AG04449 (cell line): ENCODE measurements at regions of chr15 and their contacts with region 1.

Region 1: DNA sequence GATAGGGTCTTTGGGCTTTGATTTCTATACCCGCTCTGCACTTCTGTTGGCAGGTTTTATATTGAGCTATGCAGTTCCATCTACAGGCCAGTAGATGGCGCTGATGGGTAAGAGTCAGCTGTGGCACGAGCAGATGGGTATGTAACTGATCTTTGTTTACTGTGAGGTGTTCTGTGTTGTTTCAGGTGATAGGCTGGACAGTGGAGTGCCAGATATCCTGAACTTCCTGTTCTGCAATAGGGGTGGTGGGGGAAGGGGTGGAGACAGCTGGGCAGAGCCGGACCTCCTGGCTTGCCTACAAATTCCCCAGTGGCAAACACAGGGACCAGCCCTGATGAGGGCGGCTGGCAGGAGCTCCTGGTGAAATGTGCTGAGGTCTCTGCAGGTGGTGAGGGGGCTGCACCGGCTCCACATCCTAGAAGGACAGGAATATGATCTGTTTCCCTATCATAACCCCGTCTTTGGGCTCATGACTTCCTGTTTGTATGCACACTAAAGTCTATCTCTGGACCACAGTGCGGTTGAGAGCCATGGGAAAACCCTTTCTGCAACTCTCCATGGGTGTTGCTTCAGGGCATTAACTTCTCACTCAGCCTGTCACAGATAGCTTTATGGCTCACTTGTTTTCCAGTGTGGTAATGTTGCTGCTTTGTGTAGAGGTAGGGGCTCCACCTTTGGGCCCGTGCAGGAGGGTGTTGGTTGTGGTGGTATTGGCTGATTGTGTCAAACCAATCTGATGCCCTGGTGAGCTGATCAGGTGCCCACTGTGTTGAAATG is 13.4 kb upstream of the FAM98B start:
- DNase-seq: no peak
- H3K4me3 ChIP-seq: no peak overlapping the region
- CTCF ChIP-seq: peak; percentile 83

Region 2: GRCh38 chr15:38002883-38003477 is 437.6 kb before region 1 on chr15:
- CTCF ChIA-PET with region 1: interaction called, 12 read pairs
- POLR2A ChIA-PET with region 1: no interaction called
- DNase-seq: no peak
- H3K4me3 ChIP-seq: no peak overlapping the region
- CTCF ChIP-seq: peak; percentile 81

Region 3: GRCh38 chr15:38453971-38454695 is 13.6 kb after region 1 on chr15 and contains the start of gene FAM98B:
- CTCF ChIA-PET with region 1: interaction called, 45 read pairs
- POLR2A ChIA-PET with region 1: interaction called, 5 read pairs
- DNase-seq: no peak
- H3K4me3 ChIP-seq: peak within 1 kb of the TSS; percentile 97
- CTCF ChIP-seq: no peak

Region 4: DNA sequence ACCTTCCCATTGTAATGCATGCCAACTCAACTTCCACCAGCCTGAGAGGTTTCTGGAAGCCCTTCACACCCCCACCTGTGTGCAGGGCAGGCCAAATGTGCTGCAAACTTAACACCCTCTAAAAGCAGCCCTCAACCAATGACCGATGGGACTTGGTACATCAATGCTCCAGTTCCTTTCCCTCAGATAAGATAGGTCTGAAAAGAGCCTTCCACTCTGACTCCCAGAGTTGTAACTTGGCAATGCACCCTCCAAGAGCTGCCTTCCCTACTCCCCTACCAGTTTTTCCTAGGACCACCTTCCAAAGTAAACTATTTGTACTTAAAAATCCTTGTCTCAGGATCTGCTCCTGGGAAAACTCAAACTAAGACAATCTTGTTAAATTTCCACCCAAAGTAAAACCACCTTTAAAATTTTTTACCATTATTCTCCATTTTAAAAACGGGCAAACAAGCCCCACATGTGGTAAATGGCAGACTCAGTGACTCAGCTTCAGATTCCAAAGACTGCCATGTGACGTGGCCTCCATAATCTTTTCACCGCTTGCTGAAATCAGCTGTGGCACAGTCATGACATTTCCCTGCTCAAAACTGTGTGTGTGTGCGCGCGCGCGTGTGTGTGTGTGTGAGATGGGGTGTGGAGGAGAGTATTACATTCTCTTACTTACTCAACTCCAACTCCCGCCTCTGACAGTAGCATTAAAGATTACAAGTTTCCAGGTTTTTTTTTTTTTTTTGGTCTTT is 106.9 kb after region 1 on chr15:
- CTCF ChIA-PET with region 1: interaction called, 14 read pairs
- POLR2A ChIA-PET with region 1: no interaction called
- DNase-seq: no peak
- H3K4me3 ChIP-seq: no peak overlapping the region
- CTCF ChIP-seq: no peak

Region 5: DNA sequence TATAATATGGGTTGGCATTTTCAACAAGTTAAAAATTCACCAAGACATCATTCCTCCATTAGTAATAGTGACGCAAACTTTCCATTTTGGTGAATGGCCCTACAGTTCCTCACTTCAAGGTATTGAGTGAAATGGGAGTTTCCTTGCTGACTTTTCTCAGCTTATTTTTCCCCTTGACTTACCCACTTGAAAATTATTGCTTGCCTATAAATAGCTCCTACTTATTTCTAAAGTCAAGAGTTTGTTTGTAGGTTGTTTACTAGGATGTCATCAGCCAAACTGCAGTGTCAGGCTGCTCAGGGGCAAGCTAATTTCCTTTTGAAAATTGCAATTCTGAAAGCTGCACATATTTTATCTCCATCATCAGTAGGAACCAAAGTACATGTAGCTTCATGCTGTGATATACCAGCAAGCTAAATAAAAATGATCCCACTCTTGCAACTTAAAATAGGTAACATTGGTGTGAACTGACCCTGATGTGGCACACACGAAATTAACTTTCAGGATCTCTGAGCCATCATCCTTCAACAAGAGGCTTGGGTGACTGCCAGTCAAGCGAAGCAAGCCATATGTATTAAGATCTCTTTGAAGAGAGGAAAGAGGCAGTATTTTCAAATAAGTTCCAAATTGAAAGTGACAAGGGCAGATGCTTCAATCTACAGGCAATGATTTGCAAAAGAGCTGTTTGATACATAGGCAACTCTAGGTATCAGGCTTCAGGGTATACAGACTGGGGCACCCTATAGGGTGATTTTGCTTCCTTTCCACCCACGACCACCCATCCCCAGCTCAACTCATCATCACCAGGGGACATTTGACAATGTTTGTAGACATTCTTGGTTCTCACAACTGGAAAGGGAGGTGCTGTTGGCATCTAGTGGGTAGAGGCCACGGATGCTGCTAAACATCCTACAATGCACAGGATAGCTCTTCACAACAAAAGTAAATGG is 190.9 kb after region 1 on chr15:
- CTCF ChIA-PET with region 1: interaction called, 12 read pairs
- POLR2A ChIA-PET with region 1: no interaction called
- DNase-seq: no peak
- H3K4me3 ChIP-seq: no peak overlapping the region
- CTCF ChIP-seq: no peak

Region 6: DNA sequence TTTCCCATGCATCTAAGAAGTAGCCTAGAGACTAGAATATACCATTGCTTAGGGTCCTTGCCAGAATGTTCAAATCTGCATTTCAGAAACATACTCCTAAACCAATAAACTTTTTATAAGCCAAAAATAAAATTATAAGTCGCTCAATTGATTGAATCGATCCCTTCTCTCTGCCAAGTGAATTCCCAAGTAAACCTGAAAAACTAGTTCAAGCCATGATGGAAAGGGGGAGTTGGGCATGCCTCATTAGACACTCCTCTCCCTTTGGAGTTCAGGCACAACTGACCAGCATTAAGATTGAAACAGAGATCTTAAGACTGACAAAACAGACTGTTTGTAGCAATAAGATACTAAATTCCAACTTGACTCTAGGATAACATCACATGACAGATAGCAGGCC is 237.7 kb after region 1 on chr15:
- CTCF ChIA-PET with region 1: interaction called, 325 read pairs
- POLR2A ChIA-PET with region 1: no interaction called
- DNase-seq: no peak
- H3K4me3 ChIP-seq: no peak overlapping the region
- CTCF ChIP-seq: no peak

Region 7: DNA sequence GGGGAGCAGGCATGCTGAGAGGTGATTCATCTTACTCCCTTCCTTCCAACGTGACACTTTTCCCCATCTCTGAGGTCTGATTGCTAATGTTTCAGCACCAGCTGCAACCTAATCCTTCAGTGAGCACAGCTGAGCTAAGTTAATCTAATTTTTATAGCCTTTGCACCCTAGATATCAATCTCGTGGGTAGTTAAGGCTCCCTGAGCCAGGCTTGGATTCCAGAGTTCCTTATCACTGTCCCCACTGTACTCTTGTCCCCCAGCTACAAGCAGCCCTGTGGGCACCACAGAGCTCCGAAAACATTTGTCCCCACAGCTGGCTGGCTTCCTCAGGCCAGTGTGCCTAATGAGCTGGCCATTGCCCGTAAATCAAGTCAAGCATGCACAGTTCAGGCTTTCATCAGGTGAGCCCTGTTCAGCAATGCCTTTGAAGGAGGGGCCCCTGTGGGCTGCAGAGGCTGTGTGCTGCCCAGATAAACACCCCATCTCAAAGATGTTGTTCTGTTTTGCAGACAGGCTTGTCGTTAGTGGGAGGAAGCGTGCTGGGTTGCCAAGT is 500.9 kb after region 1 on chr15:
- CTCF ChIA-PET with region 1: no interaction called
- POLR2A ChIA-PET with region 1: no interaction called
- DNase-seq: no peak
- H3K4me3 ChIP-seq: no peak overlapping the region
- CTCF ChIP-seq: no peak